PC-3 (cell line): ENCODE measurements at regions of chr7 and their contacts with region 1.

Region 1: DNA sequence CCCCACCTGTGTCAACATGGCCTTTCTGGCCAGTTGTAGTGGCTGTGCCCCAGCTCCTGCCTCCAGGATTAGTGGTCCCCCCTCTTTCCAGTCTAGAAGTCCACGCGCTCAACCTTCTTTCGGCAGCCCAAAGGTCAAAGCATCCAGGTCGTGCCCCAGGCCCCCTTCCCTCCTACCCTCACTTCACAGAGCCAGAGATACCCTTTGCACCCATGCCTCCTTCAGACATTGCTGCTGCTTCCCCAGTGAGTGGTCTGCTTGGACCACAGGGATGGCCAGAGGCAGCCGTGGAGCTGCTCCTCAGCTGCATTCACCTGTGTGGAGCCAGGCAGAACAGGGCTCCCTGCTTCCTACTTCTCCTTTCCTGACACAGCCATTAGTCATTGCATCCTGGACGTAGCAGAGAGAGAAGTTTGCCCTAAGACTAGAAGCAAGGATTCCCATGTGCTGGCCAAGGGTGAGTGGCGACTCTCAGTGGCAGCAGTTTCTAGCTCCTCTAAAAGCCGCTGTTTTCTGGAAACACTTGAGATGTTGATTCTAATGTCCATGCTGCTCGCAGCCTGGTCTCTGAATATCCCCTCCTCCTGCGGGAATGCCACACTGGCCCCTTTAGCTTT is 243.1 kb upstream of the SHH start:
- DNase-seq: peak; percentile 78
- ATAC-seq: peak; percentile 99
- H3K4me3 ChIP-seq: no peak overlapping the region
- H3K27ac ChIP-seq: no peak overlapping the region
- H3K4me1 ChIP-seq: peaks cover 10% of the 10 kb centered on the region
- H3K27me3 ChIP-seq: no peaks in the 10 kb centered on the region
- CTCF ChIP-seq: peak; percentile 51

Region 2: DNA sequence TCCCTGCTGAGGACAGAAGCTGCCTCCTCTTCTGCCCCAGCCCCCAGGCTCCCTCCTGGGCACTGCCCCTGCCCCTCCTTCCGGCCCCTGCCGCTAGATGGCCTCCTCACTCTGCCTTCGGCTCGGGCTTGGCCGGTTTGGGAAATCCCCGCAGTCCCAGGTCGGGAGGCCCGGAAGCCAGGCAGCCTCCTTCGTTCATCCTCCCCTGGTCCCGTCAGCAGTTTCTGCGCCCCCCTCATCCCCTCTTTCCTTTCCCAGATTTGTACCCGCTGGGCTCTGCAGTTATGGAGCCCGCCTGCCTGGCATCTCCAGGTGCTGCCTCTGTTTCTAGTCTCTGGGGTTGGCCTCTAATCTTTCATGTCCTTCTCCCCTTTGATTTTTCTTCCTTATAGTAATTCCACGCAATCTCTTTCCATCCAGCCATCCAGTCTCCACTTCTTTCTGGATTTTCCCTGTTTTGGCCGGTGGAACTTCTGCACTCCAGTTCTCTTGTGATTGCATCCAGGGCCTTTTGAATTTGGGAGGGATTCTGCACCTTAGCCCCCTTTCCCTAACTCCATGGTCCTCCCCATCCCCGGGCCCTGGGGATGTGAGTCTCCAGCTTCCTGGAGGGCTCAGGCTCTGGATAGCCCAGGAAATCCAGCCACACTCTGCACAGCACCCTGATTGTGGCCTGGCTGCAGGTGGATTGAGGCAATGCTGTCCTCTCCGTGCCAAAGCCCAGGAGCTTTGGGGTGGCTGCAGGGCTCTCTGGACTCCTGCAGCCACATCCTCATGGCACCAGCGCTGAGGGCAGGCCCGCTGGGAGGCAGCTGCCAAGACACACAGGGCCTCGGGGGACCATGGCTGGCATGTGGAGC is 239.8 kb before region 1 on chr7:
- CTCF ChIA-PET with region 1: no interaction called
- POLR2A ChIA-PET with region 1: no interaction called
- intact Hi-C with region 1: loop called (anchors 1 kb)
- DNase-seq: peak; percentile 76
- ATAC-seq: peak; percentile 73
- H3K4me3 ChIP-seq: no peak overlapping the region
- H3K27ac ChIP-seq: no peak overlapping the region
- H3K4me1 ChIP-seq: peaks cover 21% of the 10 kb centered on the region
- H3K27me3 ChIP-seq: peaks cover 28% of the 10 kb centered on the region
- CTCF ChIP-seq: peak; percentile 74